ENCODE measurements at regions of chr17 and their contacts with region 1.

Region 1: DNA sequence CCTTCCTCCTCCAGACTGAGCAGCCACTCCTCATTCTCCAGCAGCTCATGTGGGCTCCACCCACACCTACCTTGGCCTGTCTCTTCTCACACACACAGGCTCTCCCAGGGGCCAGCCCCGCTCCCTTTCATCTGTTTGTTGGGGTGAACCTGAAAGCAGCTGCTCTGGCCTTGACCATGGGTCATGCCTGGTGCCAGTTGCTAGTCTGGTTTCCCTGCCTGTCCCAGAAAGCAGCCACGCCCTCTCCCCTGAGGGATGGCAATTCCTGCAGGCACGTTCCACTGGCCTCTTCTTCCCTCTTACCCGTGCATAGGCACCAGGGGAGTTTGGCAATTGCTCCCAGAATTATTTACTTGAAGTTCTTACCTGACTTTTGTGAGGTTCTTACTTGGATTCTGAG is 11.5 kb upstream of the TMEM238L start:
- H3K4me3 ChIP-seq: no peak overlapping the region
- H3K27ac ChIP-seq: no peak overlapping the region
- H3K4me1 ChIP-seq: no peaks in the 10 kb centered on the region
- CTCF ChIP-seq: no peak

Region 2: GRCh38 chr17:10013365-10014221 is 801.8 kb before region 1 on chr17:
- CTCF ChIA-PET with region 1: no interaction called
- POLR2A ChIA-PET with region 1: interaction called, 11 read pairs
- H3K4me3 ChIP-seq: no peak overlapping the region
- H3K27ac ChIP-seq: no peak overlapping the region
- H3K4me1 ChIP-seq: 0 out of 2 replicates have a peak, but pooled peaks cover 2% of the 10 kb centered on the region
- CTCF ChIP-seq: no peak

Region 3: GRCh38 chr17:10754109-10754508 is 61.3 kb before region 1 on chr17:
- CTCF ChIA-PET with region 1: no interaction called
- POLR2A ChIA-PET with region 1: no interaction called
- H3K4me3 ChIP-seq: no peak overlapping the region
- H3K27ac ChIP-seq: no peak overlapping the region
- H3K4me1 ChIP-seq: no peaks in the 10 kb centered on the region
- CTCF ChIP-seq: no peak

Region 4: DNA sequence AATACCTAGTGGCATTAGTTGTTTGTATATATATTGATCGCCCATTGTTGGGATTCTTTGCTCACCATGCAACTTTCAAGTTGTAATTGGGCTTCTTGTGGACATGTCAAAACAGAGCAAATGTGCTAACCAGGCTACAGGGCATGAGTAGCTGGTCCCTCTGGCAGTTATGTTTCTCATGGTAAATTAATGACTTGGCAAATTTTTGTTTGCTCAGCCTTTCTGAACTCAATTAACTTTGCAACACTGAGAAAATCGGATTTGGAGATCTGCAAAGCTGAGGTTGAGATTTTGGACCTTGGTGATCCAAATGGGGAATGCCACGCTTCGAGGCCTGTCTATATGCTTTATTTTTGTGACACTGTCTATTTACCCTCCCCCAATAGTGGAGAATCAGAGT is 161.0 kb after region 1 on chr17:
- CTCF ChIA-PET with region 1: no interaction called
- POLR2A ChIA-PET with region 1: no interaction called
- H3K4me3 ChIP-seq: no peak overlapping the region
- H3K27ac ChIP-seq: no peak overlapping the region
- H3K4me1 ChIP-seq: no peaks in the 10 kb centered on the region
- CTCF ChIP-seq: no peak